AG04449 (cell line): ENCODE measurements at regions of chr15 and their contacts with region 1.

Region 1: DNA sequence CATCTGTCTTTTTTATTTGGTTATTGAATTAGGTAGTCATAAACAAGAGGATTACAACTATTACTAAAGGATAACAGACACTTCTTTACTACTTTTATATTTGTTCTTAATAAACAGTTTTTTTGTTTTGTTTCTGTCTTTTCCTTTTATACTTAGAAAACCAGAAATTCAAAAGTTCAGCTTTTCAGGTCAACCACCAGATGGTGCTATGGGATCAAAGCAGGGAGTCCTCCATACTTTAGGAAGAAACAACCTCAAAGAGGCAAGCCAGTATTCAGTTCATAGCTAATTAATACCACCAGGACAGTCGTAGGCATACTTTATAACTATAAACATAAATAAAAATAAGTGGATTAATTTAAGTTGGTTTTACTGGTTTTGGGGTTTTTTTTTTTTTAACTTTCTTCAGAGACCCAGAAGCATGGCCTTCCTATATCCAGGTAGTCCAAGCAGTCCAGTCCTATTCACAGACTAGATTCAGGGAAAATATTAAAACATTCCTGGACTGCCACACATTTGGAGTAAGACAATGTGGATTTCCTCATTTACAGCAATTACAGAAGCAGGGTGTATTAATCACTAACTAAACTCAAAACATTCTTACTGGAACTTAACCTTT is 16.0 kb upstream of the EID1 start:
- DNase-seq: peak; percentile 44
- H3K4me3 ChIP-seq: no peak overlapping the region
- CTCF ChIP-seq: peak; percentile 53

Region 2: GRCh38 chr15:48877630-48878595 is 16.0 kb after region 1 on chr15 and contains the start of gene EID1:
- CTCF ChIA-PET with region 1: interaction called, 31 read pairs
- POLR2A ChIA-PET with region 1: no interaction called
- DNase-seq: peak; percentile 68
- H3K4me3 ChIP-seq: peak within 1 kb of the TSS; percentile 87
- CTCF ChIP-seq: peak; percentile 24

Region 3: GRCh38 chr15:48896869-48897814 is 35.2 kb after region 1 on chr15:
- CTCF ChIA-PET with region 1: no interaction called
- POLR2A ChIA-PET with region 1: no interaction called
- DNase-seq: no peak
- H3K4me3 ChIP-seq: peak overlapping the region; percentile 28
- CTCF ChIP-seq: no peak

Region 4: DNA sequence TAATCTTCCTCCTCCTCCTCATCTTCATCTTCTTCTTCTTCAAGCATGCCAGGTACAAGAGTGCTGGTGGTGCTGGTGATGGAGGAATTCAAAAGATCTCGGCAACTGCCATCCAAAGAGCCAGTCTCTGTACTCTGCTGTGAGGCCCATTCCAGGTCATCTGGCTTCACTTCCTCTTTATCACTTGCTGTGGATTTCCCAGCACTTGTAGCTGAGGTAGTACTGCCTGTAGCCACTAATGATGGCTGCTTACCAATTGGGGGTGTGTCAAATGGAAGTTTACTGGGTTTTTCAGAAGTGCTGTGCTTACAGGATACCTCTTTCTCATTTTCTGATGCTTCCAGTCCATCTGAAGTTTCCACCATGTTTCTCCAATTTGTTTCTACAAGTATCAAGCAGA is 130.6 kb after region 1 on chr15:
- CTCF ChIA-PET with region 1: interaction called, 20 read pairs
- POLR2A ChIA-PET with region 1: no interaction called
- DNase-seq: no peak
- H3K4me3 ChIP-seq: no peak overlapping the region
- CTCF ChIP-seq: no peak

Region 5: DNA sequence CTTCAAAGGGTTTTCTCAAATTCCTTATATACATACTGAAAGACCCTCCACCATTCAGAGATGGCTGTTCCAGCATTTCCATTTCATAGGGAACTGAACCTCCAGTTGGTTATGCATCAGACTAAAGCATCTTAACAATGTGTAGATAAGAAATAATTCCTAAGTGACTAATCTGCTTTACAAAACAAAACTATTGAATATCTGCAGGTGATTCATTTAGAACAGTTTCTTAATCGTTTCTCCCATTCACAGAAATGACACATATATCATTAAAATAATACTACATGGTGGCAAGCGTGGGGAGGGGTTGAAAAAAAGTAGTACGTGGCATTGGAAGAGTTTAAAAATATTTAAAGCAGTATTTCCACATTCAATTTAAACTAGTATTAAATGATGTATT is 274.0 kb after region 1 on chr15:
- CTCF ChIA-PET with region 1: interaction called, 16 read pairs
- POLR2A ChIA-PET with region 1: no interaction called
- DNase-seq: peak; percentile 42
- H3K4me3 ChIP-seq: no peak overlapping the region
- CTCF ChIP-seq: no peak

Region 6: GRCh38 chr15:49235446-49236124 is 373.7 kb after region 1 on chr15:
- CTCF ChIA-PET with region 1: interaction called, 12 read pairs
- POLR2A ChIA-PET with region 1: no interaction called
- DNase-seq: peak; percentile 59
- H3K4me3 ChIP-seq: no peak overlapping the region
- CTCF ChIP-seq: peak; percentile 66